Colonic mucosa (tissue), 4 donors: ENCODE measurements at regions of chr2 and their contacts with region 1.

Region 1: DNA sequence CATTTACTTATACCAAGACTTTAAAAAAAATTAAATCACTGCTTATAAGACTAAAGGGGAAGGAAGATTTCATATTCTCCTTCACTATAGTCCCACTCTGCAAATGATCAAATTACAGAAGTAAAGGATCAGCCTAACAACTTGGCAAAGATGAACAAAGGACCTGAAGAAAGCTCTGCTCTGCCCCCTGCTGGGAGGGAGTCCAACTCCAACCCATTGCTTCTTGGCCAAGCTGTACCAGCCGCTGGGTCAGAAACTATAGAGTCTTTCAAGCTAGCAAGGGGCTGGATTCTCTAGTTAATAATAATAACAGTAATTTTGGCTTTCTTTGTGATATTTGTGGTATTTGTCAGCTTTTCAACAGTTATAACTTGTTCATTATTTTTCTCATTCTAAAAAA is 927.0 kb upstream of the CRIM1 start:
- DNase-seq: peak; percentile 25
- H3K4me3 ChIP-seq: no peak overlapping the region
- H3K27ac ChIP-seq: no peak overlapping the region
- H3K4me1 ChIP-seq: no peaks in the 10 kb centered on the region
- H3K27me3 ChIP-seq: no peaks in the 10 kb centered on the region
- CTCF ChIP-seq: no peak

Region 2: DNA sequence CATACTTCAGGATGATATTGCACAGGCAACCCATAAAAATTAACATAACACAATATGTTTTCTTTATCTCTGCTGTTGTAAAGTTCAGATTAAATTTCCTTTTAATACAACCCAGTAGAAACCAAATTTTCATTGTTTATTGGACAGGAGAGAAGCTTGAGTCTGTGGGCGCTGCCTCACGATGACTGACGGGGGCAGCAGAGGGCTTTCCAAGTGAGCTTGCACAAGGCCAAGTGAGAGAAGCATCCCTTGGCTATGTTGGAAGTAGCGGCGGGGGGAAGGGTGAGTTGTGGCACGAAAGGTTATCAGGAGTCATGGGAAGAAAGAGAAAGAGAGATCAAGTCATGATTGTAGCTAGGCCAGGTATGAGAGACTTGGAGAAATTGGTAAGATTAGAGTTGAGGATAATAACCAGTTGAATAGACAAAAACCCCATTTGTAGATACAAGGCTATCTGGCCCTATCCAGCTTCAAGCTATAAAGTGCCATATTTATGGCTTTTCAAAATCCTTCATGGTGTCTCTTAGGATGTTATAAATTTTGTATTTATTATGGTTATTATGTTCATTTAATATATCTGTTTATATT is 1415.7 kb before region 1 on chr2:
- intact Hi-C with region 1: loop called (anchors 10 kb)
- DNase-seq: peak; percentile 34
- H3K4me3 ChIP-seq: no peak overlapping the region
- H3K27ac ChIP-seq: no peak overlapping the region
- H3K4me1 ChIP-seq: no peaks in the 10 kb centered on the region
- H3K27me3 ChIP-seq: no peaks in the 10 kb centered on the region
- CTCF ChIP-seq: no peak